ENCODE measurements at regions of chr12 and their contacts with region 1.

Region 1: GRCh38 chr12:121793838-121794533 is 498 bp upstream of the RHOF start:
- DNase-seq: peak; percentile 96
- ATAC-seq: peak; percentile 64
- H3K4me3 Mint-ChIP-seq: peak overlapping the region; percentile 94
- H3K27ac Mint-ChIP-seq: peak overlapping the region; percentile 95
- H3K4me1 Mint-ChIP-seq: peaks cover 60% of the 10 kb centered on the region
- H3K27me3 Mint-ChIP-seq: no peaks in the 10 kb centered on the region

Region 2: GRCh38 chr12:121668750-121669520 is 125.1 kb before region 1 on chr12:
- CTCF ChIA-PET with region 1: interaction called, 11 read pairs
- POLR2A ChIA-PET with region 1: no interaction called
- DNase-seq: peak; percentile 63
- ATAC-seq: no peak
- H3K4me3 Mint-ChIP-seq: no peak overlapping the region
- H3K27ac Mint-ChIP-seq: peak overlapping the region; percentile 61
- H3K4me1 Mint-ChIP-seq: peaks cover 66% of the 10 kb centered on the region
- H3K27me3 Mint-ChIP-seq: no peaks in the 10 kb centered on the region

Region 3: GRCh38 chr12:121712461-121713256 is 81.3 kb before region 1 on chr12 and contains the start of gene TMEM120B:
- CTCF ChIA-PET with region 1: interaction called, 73 read pairs
- POLR2A ChIA-PET with region 1: interaction called, 17 read pairs
- DNase-seq: peak; percentile 85
- ATAC-seq: peak; percentile 87
- H3K4me3 Mint-ChIP-seq: peak within 1 kb of the TSS; percentile 96
- H3K27ac Mint-ChIP-seq: peak within 1 kb of the TSS; percentile 89
- H3K4me1 Mint-ChIP-seq: peaks cover 38% of the 10 kb centered on the region
- H3K27me3 Mint-ChIP-seq: no peaks in the 10 kb centered on the region
- total RNA-seq, gene TMEM120B: 7.6 to 8.2 TPM

Region 4: GRCh38 chr12:121765573-121765972 is 28.4 kb before region 1 on chr12:
- CTCF ChIA-PET with region 1: interaction called, 25 read pairs
- POLR2A ChIA-PET with region 1: interaction called, 4 read pairs
- DNase-seq: no peak
- ATAC-seq: no peak
- H3K4me3 Mint-ChIP-seq: no peak overlapping the region
- H3K27ac Mint-ChIP-seq: no peak overlapping the region
- H3K4me1 Mint-ChIP-seq: peaks cover 2% of the 10 kb centered on the region
- H3K27me3 Mint-ChIP-seq: no peaks in the 10 kb centered on the region

Region 5: GRCh38 chr12:121823101-121823726 is 29.2 kb after region 1 on chr12:
- CTCF ChIA-PET with region 1: interaction called, 11 read pairs
- POLR2A ChIA-PET with region 1: interaction called, 11 read pairs
- DNase-seq: no peak
- ATAC-seq: no peak
- H3K4me3 Mint-ChIP-seq: no peak overlapping the region
- H3K27ac Mint-ChIP-seq: no peak overlapping the region
- H3K4me1 Mint-ChIP-seq: no peaks in the 10 kb centered on the region
- H3K27me3 Mint-ChIP-seq: no peaks in the 10 kb centered on the region

Region 6: DNA sequence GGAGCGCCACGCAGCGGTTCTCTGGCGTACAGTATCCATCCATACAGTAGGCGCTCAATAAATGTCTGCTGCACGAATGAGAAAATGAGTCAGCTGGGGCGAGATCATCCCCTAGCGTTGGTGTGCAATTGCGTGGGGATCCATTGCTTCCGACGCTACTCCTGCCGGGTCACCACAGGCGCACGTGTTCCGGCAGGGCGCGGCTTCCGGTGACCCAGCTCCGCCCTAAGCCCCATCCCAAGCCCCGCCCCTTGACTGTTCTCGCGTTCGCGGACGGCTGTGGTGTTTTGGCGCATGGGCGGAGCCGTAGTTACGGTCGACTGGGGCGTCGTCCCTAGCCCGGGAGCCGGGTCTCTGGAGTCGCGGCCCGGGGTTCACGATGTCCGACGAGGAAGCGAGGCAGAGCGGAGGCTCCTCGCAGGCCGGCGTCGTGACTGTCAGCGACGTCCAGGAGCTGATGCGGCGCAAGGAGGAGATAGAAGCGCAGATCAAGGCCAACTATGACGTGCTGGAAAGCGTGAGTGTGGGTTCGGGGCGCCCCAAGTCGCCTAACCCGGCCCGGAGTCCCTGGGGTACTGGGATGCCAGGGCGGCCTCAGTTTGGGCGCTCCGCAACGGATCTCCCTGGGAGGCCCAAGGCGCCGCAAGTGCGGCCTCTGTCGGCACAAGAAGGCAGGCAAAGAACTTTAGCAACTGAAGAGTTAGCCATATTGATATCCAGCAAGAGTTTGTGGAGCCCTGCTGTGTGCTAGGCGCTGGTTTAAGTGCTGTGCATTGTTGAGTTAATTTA is 94.7 kb after region 1 on chr12 and contains the start of gene PSMD9:
- CTCF ChIA-PET with region 1: interaction called, 188 read pairs
- POLR2A ChIA-PET with region 1: interaction called, 12 read pairs
- DNase-seq: peak; percentile 98
- ATAC-seq: peak; percentile 93
- H3K4me3 Mint-ChIP-seq: peak within 1 kb of the TSS; percentile 99
- H3K27ac Mint-ChIP-seq: peak within 1 kb of the TSS; percentile 100
- H3K4me1 Mint-ChIP-seq: peaks cover 44% of the 10 kb centered on the region
- H3K27me3 Mint-ChIP-seq: no peaks in the 10 kb centered on the region
- total RNA-seq, gene PSMD9: 62.3 to 70.6 TPM

Region 7: DNA sequence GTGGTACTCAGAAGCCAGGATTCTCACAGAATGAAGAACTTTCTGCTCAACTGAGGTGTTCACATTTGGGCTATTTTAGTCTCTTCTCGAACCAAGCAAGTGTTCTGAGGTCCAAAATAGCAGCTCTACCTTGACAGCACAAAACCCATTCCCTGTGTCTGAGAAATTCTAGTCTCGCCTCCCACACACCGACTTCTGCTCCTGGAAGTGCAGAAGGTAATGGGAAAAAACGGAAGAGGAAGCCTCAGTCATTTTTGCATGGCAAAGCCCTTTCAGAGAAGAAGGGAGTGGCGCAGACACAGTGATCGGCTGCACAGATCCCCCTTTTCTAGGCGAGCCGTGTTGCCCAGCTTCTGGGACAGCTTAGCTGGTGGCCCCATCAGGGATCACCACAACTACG is 503.5 kb after region 1 on chr12:
- CTCF ChIA-PET with region 1: no interaction called
- POLR2A ChIA-PET with region 1: no interaction called
- DNase-seq: no peak
- ATAC-seq: no peak
- H3K4me3 Mint-ChIP-seq: no peak overlapping the region
- H3K27ac Mint-ChIP-seq: no peak overlapping the region
- H3K4me1 Mint-ChIP-seq: peaks cover 4% of the 10 kb centered on the region
- H3K27me3 Mint-ChIP-seq: no peaks in the 10 kb centered on the region